CD4-positive, alpha-beta T cell (primary cell): ENCODE measurements at regions of chr3 and their contacts with region 1.

Region 1: GRCh38 chr3:141360888-141361598 is 7.3 kb upstream of the ZBTB38 start:
- DNase-seq: peak in 4 of 14 experiments; percentile 21 to 71 (median 68)
- ATAC-seq: peak; percentile 79
- H3K4me3 ChIP-seq: no peak overlapping the region
- H3K4me3 Mint-ChIP-seq: no peak overlapping the region
- H3K27ac ChIP-seq: no peak overlapping the region
- H3K27ac Mint-ChIP-seq: no peak overlapping the region
- H3K4me1 ChIP-seq: peaks cover 9% of the 10 kb centered on the region
- H3K4me1 Mint-ChIP-seq: peaks cover 9% of the 10 kb centered on the region
- H3K27me3 ChIP-seq: no peaks in the 10 kb centered on the region
- H3K27me3 Mint-ChIP-seq: no peaks in the 10 kb centered on the region
- CTCF ChIP-seq: peak; percentile 76

Region 2: DNA sequence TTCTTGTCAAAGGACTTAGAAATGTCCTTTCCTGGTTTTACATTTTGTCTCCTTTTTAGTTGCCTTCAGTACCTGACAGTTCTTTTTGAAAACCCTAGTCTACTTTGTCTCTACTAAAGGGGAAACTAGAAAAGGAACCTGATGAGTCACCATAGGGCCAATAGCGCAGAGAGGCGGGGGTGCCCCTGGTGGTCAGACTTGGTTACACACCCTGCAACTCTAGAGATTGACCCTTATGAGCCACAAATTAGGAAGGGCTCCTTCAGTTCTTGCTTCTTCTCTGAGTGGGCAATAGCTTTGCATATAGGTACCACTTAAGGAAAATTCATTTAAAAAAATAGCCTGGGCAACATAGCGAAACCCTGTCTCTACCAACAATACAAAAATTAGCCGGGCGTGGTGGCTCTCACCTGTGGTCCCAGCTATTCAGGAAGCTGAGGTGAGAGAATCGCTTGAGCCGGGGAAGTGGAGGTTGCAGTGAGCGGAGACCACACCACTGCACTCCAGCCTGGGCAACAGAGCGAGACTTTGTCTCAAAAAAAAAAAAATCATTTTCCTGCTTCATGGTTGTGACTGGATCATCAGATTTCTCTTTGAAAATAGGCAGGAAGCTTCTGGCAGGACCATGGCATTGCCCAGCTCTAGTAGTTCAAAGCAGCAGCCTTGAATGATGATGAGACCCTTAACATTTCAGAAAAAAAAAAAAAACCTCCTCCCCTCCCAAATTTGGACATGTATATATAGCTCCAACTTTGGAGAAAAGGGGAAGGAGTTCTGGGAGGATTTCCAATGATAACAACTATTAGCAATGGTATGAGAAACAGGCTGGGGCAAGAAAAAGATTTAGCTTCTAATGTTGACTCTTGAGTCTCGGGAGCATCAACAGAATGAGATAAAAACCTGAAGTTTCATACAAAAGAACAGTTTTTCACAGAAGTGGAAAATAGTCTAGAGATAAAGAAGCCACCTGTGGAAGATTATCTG is 80.6 kb after region 1 on chr3:
- CTCF ChIA-PET with region 1: interaction called, 21 read pairs
- POLR2A ChIA-PET with region 1: interaction called, 3 read pairs
- intact Hi-C with region 1: no loop called
- DNase-seq: peak; percentile 42 to 86 (median 74)
- ATAC-seq: peak; percentile 97
- H3K4me3 ChIP-seq: no peak overlapping the region
- H3K4me3 Mint-ChIP-seq: peak overlapping the region; percentile 4
- H3K27ac ChIP-seq: no peak overlapping the region
- H3K27ac Mint-ChIP-seq: peak overlapping the region; percentile 68
- H3K4me1 ChIP-seq: peaks cover 9% of the 10 kb centered on the region
- H3K4me1 Mint-ChIP-seq: peaks cover 28% of the 10 kb centered on the region
- H3K27me3 ChIP-seq: no peaks in the 10 kb centered on the region
- H3K27me3 Mint-ChIP-seq: no peaks in the 10 kb centered on the region
- CTCF ChIP-seq: peak; percentile 75